T-cell (primary cell): ENCODE measurements at regions of chr10 and their contacts with region 1.

Region 1: GRCh38 chr10:117391436-117392205 is 16.4 kb upstream of the PDZD8 start:
- DNase-seq: no peak
- ATAC-seq: no peak
- H3K4me3 ChIP-seq: no peak overlapping the region
- H3K4me3 Mint-ChIP-seq: no peak overlapping the region
- H3K27ac ChIP-seq: no peak overlapping the region
- H3K27ac Mint-ChIP-seq: no peak overlapping the region
- H3K4me1 ChIP-seq: no peaks in the 10 kb centered on the region
- H3K4me1 Mint-ChIP-seq: no peaks in the 10 kb centered on the region
- H3K27me3 ChIP-seq: peaks cover 0 to 5% of the 10 kb centered on the region in 2 experiments
- H3K27me3 Mint-ChIP-seq: peaks cover 49 to 61% of the 10 kb centered on the region in 2 donors

Region 2: GRCh38 chr10:117363028-117363427 is 28.6 kb before region 1 on chr10:
- CTCF ChIA-PET with region 1: no interaction called
- POLR2A ChIA-PET with region 1: no interaction called
- DNase-seq: no peak
- ATAC-seq: no peak
- H3K4me3 ChIP-seq: no peak overlapping the region
- H3K4me3 Mint-ChIP-seq: no peak overlapping the region
- H3K27ac ChIP-seq: no peak overlapping the region
- H3K27ac Mint-ChIP-seq: no peak overlapping the region
- H3K4me1 ChIP-seq: peaks cover 0 to 4% of the 10 kb centered on the region in 2 experiments
- H3K4me1 Mint-ChIP-seq: peaks cover 55 to 71% (median 71%) of the 10 kb centered on the region in 3 donors
- H3K27me3 ChIP-seq: no peaks in the 10 kb centered on the region
- H3K27me3 Mint-ChIP-seq: no peaks in the 10 kb centered on the region

Region 3: DNA sequence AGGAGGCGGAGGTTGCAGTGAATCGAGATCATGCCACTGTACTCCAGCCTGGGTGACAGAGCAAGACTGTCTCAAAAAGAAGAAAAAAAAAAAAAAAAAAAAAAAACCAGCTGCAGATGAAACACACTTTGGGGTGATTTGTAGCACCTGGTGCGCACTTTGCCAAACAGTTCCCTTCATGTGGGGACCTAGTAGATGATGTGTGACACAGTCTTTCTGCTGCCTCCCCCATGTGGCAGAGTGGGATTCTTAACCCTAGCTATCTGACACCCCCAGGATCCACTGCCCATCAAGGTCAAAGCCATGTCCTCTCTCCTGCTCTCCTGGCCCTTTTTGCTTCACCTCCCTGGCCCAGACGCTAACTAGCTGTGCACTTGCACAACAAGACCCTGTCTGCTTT is 35.7 kb after region 1 on chr10:
- CTCF ChIA-PET with region 1: no interaction called
- POLR2A ChIA-PET with region 1: interaction called in 1 of 2 experiments, 10 read pairs
- DNase-seq: no peak
- ATAC-seq: no peak
- H3K4me3 ChIP-seq: no peak overlapping the region
- H3K4me3 Mint-ChIP-seq: no peak overlapping the region
- H3K27ac ChIP-seq: no peak overlapping the region
- H3K27ac Mint-ChIP-seq: no peak overlapping the region
- H3K4me1 ChIP-seq: no peaks in the 10 kb centered on the region
- H3K4me1 Mint-ChIP-seq: no peaks in the 10 kb centered on the region
- H3K27me3 ChIP-seq: no peaks in the 10 kb centered on the region
- H3K27me3 Mint-ChIP-seq: peaks cover 5 to 10% of the 10 kb centered on the region in 2 donors